ENCODE measurements at regions of chr15 and their contacts with region 1.

Region 1: GRCh38 chr15:33086507-33087121 is 107.9 kb downstream of the FMN1 start:
- DNase-seq: peak; percentile 87
- ATAC-seq: peak; percentile 60
- H3K4me3 ChIP-seq: no peak overlapping the region
- H3K27ac ChIP-seq: peak overlapping the region; percentile 41; the same call in 1 of the 2 replicates
- H3K4me1 ChIP-seq: peaks cover 16% of the 10 kb centered on the region
- H3K27me3 ChIP-seq: no peaks in the 10 kb centered on the region
- CTCF ChIP-seq: peak; percentile 83
- POLR2A ChIP-seq: no peak
- RAD21 ChIP-seq: peak; percentile 90

Region 2: DNA sequence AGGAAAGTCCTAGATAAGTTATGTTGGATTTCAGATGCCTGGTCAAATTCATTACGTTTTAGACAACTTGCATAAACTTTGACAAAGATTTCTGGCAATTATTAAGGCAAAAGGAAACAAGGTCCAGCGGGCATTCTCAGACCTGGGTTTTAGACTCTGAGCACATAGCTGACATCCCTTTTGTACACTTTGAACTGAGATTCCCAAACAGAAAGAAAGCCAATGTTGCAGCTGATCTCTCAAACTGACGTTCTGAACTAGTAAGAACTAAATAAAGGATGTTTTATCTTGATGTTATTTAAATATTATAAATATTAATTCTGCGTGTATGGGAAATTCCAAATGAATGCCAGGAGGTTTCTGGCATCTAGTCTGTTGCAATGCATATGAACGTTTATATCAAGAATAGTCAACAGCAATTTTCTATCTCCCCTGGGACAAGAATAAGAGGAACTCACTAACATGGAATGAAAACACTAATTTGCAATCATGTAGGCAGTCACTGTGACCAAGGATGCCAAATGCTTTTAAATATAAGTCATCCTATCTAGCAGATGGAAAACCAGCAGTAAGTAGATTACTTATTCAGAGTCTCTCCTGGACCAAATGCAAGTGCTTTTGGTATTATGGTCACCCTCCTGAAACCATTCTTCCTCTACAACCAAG is 166.7 kb before region 1 on chr15:
- CTCF ChIA-PET with region 1: no interaction called
- POLR2A ChIA-PET with region 1: no interaction called
- dilution Hi-C with region 1: no loop called
- in situ Hi-C with region 1: no loop called
- intact Hi-C with region 1: no loop called
- DNase-seq: peak; percentile 99
- ATAC-seq: peak; percentile 88
- H3K4me3 ChIP-seq: no peak overlapping the region
- H3K27ac ChIP-seq: peak overlapping the region; percentile 90
- H3K4me1 ChIP-seq: peaks cover 32% of the 10 kb centered on the region
- H3K27me3 ChIP-seq: no peaks in the 10 kb centered on the region
- CTCF ChIP-seq: no peak
- POLR2A ChIP-seq: peak; percentile 45; the same call in 1 of the 2 replicates
- RAD21 ChIP-seq: no peak; the same call in 1 of the 2 replicates

Region 3: DNA sequence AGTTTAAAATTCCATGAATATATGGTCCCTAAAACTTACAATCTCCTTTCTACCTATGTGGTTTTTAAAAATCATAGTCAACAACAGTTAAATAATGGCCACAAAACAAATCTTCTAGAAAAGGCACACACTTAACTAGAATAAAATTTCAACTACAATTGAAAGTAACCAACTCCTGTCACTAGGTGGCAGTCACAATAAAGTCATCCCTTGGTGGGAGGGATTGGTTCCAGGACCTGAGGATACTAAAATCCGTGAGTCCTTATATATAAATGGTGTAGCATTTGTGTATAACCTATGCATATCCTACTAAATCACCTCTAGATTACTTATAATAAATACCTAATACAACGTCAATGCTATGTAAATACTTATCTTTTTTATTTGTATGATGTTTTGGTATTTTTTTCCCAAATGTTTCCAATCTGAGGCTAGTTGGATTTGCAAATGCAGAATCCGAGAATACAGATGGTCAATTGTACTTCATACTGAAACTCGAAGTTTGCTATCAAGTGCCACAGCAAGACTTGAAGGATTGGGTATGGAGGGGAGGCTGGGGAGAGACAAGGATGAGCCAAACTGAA is 64.7 kb before region 1 on chr15:
- CTCF ChIA-PET with region 1: no interaction called
- POLR2A ChIA-PET with region 1: no interaction called
- dilution Hi-C with region 1: no loop called
- in situ Hi-C with region 1: no loop called
- intact Hi-C with region 1: loop called (anchors 5 kb)
- DNase-seq: peak; percentile 75
- ATAC-seq: peak; percentile 77
- H3K4me3 ChIP-seq: no peak overlapping the region
- H3K27ac ChIP-seq: peak overlapping the region; percentile 55; the same call in 1 of the 2 replicates
- H3K4me1 ChIP-seq: peaks cover 12% of the 10 kb centered on the region
- H3K27me3 ChIP-seq: no peaks in the 10 kb centered on the region
- CTCF ChIP-seq: peak; percentile 66
- POLR2A ChIP-seq: no peak
- RAD21 ChIP-seq: peak; percentile 75

Region 4: DNA sequence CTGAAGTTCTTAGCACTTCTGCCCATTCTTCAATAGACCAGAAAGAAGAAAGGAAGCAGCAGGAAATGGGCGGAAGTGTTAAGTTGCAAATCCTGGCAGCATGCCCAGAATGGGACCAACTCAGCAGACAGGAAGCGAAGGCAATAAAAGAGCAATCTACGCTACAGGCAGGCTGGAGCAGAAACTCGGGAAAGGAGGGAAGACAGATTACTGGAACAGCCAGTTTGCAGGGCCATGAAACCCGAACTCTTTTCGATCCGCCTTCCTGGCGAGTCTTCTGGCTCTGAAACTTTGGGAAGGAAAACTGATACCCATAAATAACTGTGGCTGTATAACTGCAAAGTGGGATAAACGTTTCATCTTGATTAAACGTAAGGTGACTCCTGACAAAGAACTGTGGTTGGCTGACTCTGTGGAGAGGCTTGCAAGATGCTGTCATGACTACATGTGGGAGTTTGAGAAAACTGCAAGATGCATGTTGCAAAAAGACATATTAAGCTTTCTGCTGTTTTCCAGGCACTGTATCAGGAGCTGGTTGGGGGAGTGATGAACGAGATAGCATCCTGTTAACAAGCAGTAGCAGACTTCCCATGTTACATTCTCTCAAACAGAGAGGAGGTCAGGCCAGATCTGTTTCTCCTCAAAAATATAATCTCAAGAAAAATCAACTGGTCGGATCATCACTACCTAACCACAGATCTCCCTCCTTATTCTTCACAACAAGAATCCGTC is 40.1 kb after region 1 on chr15:
- CTCF ChIA-PET with region 1: interaction called, 35 read pairs
- POLR2A ChIA-PET with region 1: no interaction called
- dilution Hi-C with region 1: no loop called
- in situ Hi-C with region 1: loop called (anchors 5 kb)
- intact Hi-C with region 1: no loop called
- DNase-seq: peak; percentile 98
- ATAC-seq: peak; percentile 86
- H3K4me3 ChIP-seq: peak overlapping the region; percentile 17; the same call in 1 of the 2 replicates
- H3K27ac ChIP-seq: peak overlapping the region; percentile 35
- H3K4me1 ChIP-seq: peaks cover 6% of the 10 kb centered on the region
- H3K27me3 ChIP-seq: no peaks in the 10 kb centered on the region
- CTCF ChIP-seq: no peak
- POLR2A ChIP-seq: no peak
- RAD21 ChIP-seq: 0 out of 2 replicates have a peak, but pooled peaks have one; percentile 2

Region 5: DNA sequence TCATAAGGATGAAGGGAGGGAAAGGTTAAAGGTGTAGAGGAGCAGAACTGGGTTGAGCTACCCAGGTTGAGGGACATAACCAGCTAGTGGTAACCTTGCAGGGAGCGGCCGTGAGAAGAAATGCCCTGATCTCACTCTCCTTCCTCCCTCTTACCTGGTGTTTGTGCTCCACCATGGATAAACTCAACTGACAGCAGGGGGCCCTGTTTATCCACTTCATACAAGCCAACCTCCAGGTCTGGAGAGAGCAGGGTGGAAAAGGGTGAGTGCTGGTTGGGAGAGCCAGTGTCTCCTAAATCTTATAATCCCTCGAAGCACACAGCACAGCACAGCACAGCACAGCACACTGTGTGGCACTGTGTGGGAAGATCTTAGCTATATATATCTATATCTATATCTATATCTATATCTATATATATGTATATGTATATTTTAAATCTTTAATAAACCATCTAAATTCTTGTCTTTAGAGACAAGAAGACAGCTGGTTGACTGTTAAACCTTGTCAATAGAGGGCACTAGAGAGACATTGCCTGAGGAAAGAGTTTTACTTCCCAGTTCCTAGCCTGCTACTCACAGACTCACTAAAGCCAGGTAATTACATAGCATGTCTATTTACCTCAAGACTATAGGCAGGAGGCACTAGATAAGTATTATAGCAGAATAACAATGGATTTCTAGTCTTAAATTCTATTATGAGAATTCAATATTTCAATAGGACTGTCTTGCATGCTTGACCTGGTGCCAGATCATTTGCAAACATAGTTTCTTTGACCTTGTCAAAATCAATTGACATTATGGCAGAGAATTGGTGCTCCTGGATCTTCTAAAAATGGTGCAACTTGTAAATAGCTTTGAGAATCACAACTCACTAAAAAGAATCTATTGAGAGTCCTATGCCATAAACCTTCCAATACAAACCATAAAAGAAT is 129.6 kb after region 1 on chr15:
- CTCF ChIA-PET with region 1: no interaction called
- POLR2A ChIA-PET with region 1: no interaction called
- dilution Hi-C with region 1: no loop called
- in situ Hi-C with region 1: no loop called
- intact Hi-C with region 1: loop called (anchors 5 kb)
- DNase-seq: peak; percentile 24
- ATAC-seq: peak; percentile 60
- H3K4me3 ChIP-seq: no peak overlapping the region
- H3K27ac ChIP-seq: no peak overlapping the region
- H3K4me1 ChIP-seq: no peaks in the 10 kb centered on the region
- H3K27me3 ChIP-seq: peaks cover 2% of the 10 kb centered on the region; the same call in 1 of the 2 replicates
- CTCF ChIP-seq: peak; percentile 43
- POLR2A ChIP-seq: no peak
- RAD21 ChIP-seq: no peak

Region 6: DNA sequence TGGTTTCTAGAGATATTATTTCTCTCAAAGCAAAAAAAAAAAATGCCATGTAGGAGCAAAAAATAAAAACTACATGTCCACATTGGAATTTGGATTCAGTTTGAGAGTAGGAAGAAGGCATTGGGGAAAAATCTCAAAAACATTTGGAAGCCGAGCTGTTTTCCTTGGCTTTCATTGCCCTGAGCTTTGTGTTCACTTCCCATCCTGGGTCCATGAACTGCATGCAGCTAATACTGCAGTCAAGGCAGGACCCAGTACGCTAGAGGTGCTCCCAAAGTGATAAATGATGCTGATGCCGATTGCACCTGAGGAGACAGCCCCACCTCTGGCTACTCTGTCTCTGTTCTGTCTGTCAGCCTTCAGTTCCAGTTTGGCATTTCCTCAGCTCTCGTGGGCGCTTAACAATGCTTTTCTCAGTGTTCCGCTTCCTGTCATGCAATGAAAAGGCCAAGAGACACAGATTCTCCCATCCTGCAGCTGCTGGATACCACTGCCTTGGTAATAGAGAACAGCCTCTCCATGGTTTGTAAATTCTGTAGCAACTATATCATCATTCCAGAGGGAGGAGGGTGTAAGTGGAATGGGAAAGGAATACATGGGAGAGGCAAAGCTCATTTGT is 405.9 kb after region 1 on chr15:
- CTCF ChIA-PET with region 1: no interaction called
- POLR2A ChIA-PET with region 1: no interaction called
- dilution Hi-C with region 1: no loop called
- in situ Hi-C with region 1: no loop called
- intact Hi-C with region 1: no loop called
- DNase-seq: no peak
- ATAC-seq: no peak
- H3K4me3 ChIP-seq: no peak overlapping the region
- H3K27ac ChIP-seq: no peak overlapping the region
- H3K4me1 ChIP-seq: no peaks in the 10 kb centered on the region
- H3K27me3 ChIP-seq: no peaks in the 10 kb centered on the region; the same call in 1 of the 2 replicates
- CTCF ChIP-seq: no peak
- POLR2A ChIP-seq: no peak
- RAD21 ChIP-seq: no peak

Region 7: GRCh38 chr15:33700695-33701304 is 614.2 kb after region 1 on chr15:
- CTCF ChIA-PET with region 1: no interaction called
- POLR2A ChIA-PET with region 1: no interaction called
- dilution Hi-C with region 1: no loop called
- in situ Hi-C with region 1: no loop called
- intact Hi-C with region 1: loop called (anchors 1 kb)
- DNase-seq: peak; percentile 77
- ATAC-seq: peak; percentile 100
- H3K4me3 ChIP-seq: no peak overlapping the region
- H3K27ac ChIP-seq: no peak overlapping the region
- H3K4me1 ChIP-seq: no peaks in the 10 kb centered on the region
- H3K27me3 ChIP-seq: peaks cover 15% of the 10 kb centered on the region
- CTCF ChIP-seq: peak; percentile 92
- POLR2A ChIP-seq: no peak
- RAD21 ChIP-seq: peak; percentile 86